PC-9 (cell line): ENCODE measurements at regions of chr13 and their contacts with region 1.

Region 1: DNA sequence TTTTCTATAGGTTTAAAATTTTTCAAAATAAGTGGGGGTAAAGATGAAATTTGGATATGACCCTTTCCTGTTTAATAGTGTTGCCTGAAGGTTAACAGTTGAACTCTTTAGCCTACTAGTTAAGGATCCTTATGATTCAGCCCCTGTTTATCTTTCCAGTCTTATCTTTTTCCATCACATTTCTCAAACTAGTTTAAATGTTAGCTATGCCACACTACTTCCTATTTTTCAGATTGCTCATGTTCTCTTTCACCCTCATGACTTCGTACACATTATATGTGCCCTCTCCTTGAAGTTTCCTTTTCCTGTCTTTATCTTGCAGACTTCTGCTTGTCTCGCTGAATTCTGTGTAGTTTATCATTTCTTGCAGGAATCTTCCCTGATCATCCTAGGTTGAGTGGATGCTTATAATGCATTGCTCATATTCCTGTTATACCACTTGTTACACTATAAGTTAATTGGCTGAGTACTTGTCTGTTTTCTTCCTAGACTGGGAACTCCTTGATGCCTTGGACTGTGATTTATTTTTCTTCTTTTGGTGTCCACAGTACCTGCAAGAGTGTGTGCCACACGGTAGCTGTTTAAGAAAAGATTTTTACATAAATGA is 86.7 kb downstream of the FNDC3A start:
- DNase-seq: peak in 1 of 2 experiments; percentile 61
- H3K4me3 ChIP-seq: no peak overlapping the region
- H3K27ac ChIP-seq: peak overlapping the region; percentile 58; the same call in 1 of the 2 replicates
- H3K4me1 ChIP-seq: peaks cover 29% of the 10 kb centered on the region
- H3K27me3 ChIP-seq: no peaks in the 10 kb centered on the region
- CTCF ChIP-seq: no peak

Region 2: GRCh38 chr13:49046002-49046401 is 16.4 kb before region 1 on chr13:
- CTCF ChIA-PET with region 1: interaction called, 5 read pairs
- POLR2A ChIA-PET with region 1: interaction called, 50 read pairs
- intact Hi-C with region 1: no loop called
- DNase-seq: no peak
- H3K4me3 ChIP-seq: no peak overlapping the region
- H3K27ac ChIP-seq: no peak overlapping the region
- H3K4me1 ChIP-seq: no peaks in the 10 kb centered on the region
- H3K27me3 ChIP-seq: no peaks in the 10 kb centered on the region
- CTCF ChIP-seq: no peak

Region 3: GRCh38 chr13:49098771-49099512 is 36.5 kb after region 1 on chr13:
- CTCF ChIA-PET with region 1: no interaction called
- POLR2A ChIA-PET with region 1: no interaction called
- intact Hi-C with region 1: loop called (anchors 2 kb)
- DNase-seq: peak; percentile 10 to 50
- H3K4me3 ChIP-seq: no peak overlapping the region; the same call in 1 of the 2 replicates
- H3K27ac ChIP-seq: peak overlapping the region; percentile 68
- H3K4me1 ChIP-seq: peaks cover 34% of the 10 kb centered on the region
- H3K27me3 ChIP-seq: no peaks in the 10 kb centered on the region
- CTCF ChIP-seq: peak; percentile 62

Region 4: DNA sequence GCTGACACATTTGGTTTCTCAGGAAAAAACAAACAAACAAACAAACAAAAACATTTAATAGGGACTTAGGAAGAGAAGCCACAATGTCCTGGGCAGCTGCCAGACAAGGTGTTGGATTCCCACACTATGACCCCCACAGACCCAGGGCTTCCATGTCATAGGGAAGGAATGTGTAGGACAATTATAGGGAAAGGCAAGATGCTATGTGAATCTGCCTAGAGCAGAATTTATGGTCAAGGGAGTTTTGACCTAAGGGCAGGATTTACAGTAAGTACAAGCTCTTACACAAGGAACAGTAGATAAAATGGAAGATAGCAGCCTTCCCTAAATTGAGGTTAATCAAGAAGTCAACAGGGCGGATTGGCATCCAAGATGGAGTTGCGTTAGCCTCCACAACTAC is 176.3 kb after region 1 on chr13:
- CTCF ChIA-PET with region 1: no interaction called
- POLR2A ChIA-PET with region 1: no interaction called
- intact Hi-C with region 1: loop called (anchors 2 kb)
- DNase-seq: peak; percentile 71 to 93
- H3K4me3 ChIP-seq: no peak overlapping the region
- H3K27ac ChIP-seq: no peak overlapping the region
- H3K4me1 ChIP-seq: peaks cover 8% of the 10 kb centered on the region; the same call in 1 of the 2 replicates
- H3K27me3 ChIP-seq: peaks cover 51% of the 10 kb centered on the region
- CTCF ChIP-seq: no peak